ENCODE measurements at regions of chr10 and their contacts with region 1.

Region 1: DNA sequence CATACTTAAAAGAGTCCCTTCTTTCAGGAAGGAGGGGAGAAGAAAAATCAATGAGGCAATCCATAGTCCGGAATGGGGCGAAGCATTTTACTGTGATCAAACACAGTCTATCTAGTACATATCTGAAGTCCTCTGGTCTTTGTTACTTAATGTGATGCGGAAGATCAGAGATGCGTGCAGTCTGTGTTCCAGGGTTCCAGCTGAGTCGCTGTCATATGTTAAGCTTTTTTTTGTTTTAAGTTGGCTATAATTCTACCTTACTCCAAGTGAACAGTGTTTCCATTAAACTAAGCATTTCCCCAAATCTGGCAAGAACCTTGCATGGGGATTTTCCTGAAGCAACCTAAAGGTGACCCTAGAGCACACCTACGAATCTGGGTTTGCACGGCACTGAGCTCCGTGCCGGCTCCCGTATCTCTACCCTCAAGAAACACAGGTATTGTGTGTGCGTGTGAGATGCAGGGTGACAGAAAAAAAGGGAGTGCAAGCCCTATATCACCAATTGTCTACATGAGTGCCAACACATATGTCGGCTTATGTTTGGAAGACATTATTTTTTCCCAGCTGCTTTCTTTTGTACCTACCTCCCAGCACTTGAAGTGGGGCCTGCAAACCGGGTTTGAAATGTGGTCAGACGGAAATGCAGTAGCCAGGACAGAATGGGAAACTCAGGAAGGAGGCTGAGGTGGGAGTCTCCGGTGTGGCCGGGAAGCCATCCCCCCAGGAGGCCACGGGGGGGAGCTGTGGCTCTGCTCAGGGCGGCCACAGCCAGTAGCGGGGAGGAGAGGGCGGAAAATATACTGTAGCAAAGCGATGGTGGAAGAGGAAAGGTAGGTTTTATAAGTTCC is 435.8 kb upstream of the MGMT start:
- DNase-seq: peak in 4 of 10 donors; percentile 11 to 62 (median 30)
- H3K4me3 ChIP-seq: no peak overlapping the region
- H3K27ac ChIP-seq: no peak overlapping the region
- H3K27me3 ChIP-seq: peaks cover 8 to 98% (median 85%) of the 10 kb centered on the region in 45 donors
- CTCF ChIP-seq: peak; percentile 25 to 89 (median 78)

Region 2: DNA sequence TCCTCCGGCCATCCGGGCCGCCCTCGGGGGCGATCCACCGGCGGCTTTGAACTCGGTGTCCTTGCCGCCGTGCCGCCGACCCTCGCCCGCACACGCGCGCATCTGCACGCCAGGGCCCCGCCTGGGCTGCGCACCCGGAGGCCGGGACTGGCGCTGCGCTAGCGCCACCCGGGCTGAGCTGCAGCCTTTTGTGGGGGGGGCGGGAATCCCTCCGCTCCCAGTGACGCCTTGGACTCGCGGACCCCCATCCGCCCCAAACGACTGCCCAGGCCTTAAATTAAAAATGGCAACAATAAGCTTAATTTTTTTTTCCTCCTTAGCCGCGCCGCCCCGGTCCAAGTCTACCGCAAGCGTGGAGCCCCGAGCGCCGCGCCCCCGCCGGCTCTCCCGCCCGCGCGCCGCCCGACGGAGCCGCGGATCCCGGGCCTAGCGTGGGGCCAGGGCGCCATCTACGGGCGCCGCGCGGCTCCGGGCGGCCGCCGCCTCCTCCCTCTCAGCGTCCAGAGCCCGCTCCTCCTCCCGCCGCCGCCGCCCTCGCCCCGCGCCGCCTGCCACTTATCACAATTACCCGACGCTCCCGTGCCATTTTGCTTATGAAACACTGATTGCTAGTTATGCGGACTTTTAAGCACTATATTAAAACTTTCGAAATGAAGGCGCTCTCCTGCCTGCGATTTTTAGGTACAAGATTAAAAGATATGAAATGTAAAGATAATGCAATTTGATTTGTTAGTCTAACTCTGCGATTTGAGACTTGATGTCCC is 940.3 kb after region 1 on chr10:
- intact Hi-C with region 1: loop called in 1 of 2 experiments (anchors 5 kb)
- DNase-seq: peak in 1 of 10 donors; percentile 31
- H3K4me3 ChIP-seq: peak overlapping the region in 33 of 59 donors; percentile 18 to 56 (median 39)
- H3K27ac ChIP-seq: no peak overlapping the region
- H3K27me3 ChIP-seq: peaks cover 22 to 100% (median 91%) of the 10 kb centered on the region in 45 donors
- CTCF ChIP-seq: peak in 41 of 56 donors; percentile 9 to 80 (median 41)